ENCODE measurements at regions of chr2 and their contacts with region 1.

Region 1: GRCh38 chr2:121649596-121650314 is 493 bp upstream of the CLASP1 start:
- DNase-seq: peak; percentile 97
- H3K4me3 Mint-ChIP-seq: peak overlapping the region; percentile 89
- H3K27ac Mint-ChIP-seq: peak overlapping the region; percentile 97
- H3K4me1 Mint-ChIP-seq: peaks cover 25% of the 10 kb centered on the region
- H3K27me3 Mint-ChIP-seq: no peaks in the 10 kb centered on the region
- CTCF ChIP-seq: no peak

Region 2: DNA sequence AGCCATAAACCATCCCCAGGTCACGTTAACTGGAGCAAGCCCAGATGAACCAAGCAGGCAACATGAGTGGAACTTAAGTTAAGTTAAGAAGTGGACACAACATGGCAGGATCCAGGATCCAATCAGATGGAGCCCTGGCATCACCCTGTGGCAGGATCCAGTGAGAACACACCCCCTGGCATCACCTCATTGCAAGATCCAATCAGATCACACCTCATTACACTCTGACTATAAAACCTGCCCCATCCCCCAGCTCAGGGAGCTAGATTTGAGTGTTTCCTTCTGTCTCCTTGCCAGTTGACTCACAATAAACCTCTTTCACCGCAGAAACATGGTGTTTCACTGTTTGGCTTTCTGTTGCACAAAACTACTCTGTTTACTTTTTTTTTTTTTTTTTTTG is 537.2 kb before region 1 on chr2:
- CTCF ChIA-PET with region 1: no interaction called
- POLR2A ChIA-PET with region 1: no interaction called
- intact Hi-C with region 1: no loop called
- DNase-seq: peak; percentile 10
- H3K4me3 Mint-ChIP-seq: no peak overlapping the region
- H3K27ac Mint-ChIP-seq: no peak overlapping the region
- H3K4me1 Mint-ChIP-seq: no peaks in the 10 kb centered on the region
- H3K27me3 Mint-ChIP-seq: no peaks in the 10 kb centered on the region
- CTCF ChIP-seq: no peak

Region 3: DNA sequence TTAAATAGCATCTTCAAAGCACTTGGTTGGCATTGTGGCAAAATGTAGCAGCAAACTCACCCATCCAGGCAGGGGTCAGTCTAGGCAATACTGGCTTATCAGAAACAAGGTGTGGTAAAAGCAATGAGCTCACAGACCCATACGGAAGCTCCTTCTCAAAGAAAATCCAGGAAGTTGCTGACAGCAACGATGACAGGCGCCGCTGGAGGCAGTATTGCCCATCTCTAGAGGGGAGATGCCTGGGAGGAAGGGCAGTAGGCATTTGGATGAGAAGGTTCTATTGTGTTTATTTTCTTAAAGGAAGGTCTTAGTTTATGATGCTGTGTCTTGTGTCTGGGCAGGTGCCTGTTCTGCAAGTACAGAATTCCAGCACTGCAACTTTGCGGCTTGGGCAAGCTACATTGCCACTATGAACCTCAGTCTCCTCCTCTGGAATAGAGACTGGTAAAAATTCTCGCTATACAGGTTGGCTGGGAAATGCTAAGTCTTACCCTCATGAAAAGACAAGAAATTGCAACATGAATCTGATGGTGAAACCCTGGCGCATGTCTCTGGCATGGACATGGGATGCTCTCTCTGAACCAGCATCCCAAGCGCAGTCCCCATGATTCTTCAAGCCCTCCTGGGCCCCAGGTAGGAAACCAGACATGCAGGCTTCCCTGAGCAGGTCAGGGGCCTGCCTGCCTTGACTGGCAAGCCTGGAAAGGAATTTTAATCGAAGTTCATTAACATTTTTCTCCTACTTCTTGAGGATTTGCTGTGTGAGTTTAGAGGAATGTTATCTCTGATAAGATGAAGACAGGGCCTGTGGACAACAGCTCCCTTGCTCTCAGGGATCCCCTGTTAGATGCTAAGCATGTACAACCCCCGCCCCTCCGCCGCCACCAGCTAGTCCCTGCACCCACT is 520.7 kb before region 1 on chr2:
- CTCF ChIA-PET with region 1: no interaction called
- POLR2A ChIA-PET with region 1: no interaction called
- intact Hi-C with region 1: no loop called
- DNase-seq: no peak
- H3K4me3 Mint-ChIP-seq: no peak overlapping the region
- H3K27ac Mint-ChIP-seq: no peak overlapping the region
- H3K4me1 Mint-ChIP-seq: peaks cover 3% of the 10 kb centered on the region
- H3K27me3 Mint-ChIP-seq: no peaks in the 10 kb centered on the region
- CTCF ChIP-seq: no peak

Region 4: DNA sequence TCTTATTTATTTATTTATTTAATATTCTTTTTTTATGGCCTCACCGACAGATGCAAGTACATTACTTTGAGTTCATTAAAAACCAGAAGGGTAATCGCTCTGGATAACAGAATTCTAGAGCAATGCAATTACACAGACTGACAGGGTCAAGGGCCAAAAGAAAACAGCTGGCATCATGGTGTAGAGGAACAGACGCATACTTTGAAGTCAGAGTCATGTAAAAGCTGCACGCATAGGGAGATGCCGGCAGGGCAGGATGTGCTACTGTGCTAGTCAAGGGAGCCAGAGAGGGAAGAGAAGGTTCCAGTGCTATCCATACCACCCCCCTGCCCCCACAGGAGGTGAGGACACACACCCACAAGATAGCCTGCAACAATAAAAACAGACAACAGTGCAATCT is 249.6 kb before region 1 on chr2:
- CTCF ChIA-PET with region 1: no interaction called
- POLR2A ChIA-PET with region 1: interaction called, 8 read pairs
- intact Hi-C with region 1: loop called (anchors 1 kb)
- DNase-seq: no peak
- H3K4me3 Mint-ChIP-seq: no peak overlapping the region
- H3K27ac Mint-ChIP-seq: no peak overlapping the region
- H3K4me1 Mint-ChIP-seq: no peaks in the 10 kb centered on the region
- H3K27me3 Mint-ChIP-seq: no peaks in the 10 kb centered on the region
- CTCF ChIP-seq: no peak

Region 5: DNA sequence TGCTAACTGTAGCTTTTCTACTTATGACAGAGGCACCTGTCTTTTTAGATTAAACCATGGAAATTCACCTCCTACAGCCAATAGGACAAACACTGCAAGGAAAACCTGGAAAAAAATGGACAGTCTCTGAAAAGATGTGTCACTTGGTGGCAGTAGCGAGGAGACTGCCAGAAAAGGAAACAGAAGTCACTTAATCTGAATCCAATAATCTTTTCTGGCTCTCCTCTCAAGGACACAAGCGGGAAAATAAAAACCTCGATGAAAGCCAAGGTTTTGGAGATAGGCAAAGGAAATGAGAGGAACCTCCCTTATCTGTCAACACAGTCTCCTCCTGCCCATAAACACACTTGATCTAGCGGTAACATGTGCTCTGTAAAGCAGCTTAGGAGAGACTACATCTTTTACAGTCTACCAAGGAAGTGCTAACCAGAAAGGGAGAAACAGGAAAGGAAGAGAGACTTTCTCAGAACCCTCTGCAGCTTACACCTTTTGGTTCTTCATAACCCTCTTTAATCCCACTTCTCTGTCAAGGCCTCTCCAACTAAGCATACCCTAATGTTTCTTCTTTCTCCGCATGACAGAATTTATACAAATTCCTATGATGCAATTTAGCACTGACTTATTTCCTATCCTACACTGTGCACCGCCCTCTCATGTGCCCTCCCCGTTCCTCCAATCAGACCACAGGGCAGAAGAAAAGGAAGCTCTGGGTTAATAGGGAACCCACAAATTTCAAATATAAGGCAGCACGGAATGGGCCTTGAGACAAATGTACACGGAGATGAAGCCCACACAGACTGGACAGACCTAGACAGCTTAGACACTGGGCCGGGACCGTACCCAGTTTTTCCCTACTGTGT is 53.3 kb before region 1 on chr2:
- CTCF ChIA-PET with region 1: interaction called, 5 read pairs
- POLR2A ChIA-PET with region 1: interaction called, 31 read pairs
- intact Hi-C with region 1: loop called (anchors 5 kb)
- DNase-seq: peak; percentile 65
- H3K4me3 Mint-ChIP-seq: no peak overlapping the region
- H3K27ac Mint-ChIP-seq: peak overlapping the region; percentile 55
- H3K4me1 Mint-ChIP-seq: peaks cover 23% of the 10 kb centered on the region
- H3K27me3 Mint-ChIP-seq: no peaks in the 10 kb centered on the region
- CTCF ChIP-seq: peak; percentile 36

Region 6: GRCh38 chr2:121634354-121635307 is 15.1 kb before region 1 on chr2:
- CTCF ChIA-PET with region 1: interaction called, 3 read pairs
- POLR2A ChIA-PET with region 1: interaction called, 78 read pairs
- intact Hi-C with region 1: no loop called
- DNase-seq: peak; percentile 54
- H3K4me3 Mint-ChIP-seq: peak overlapping the region; percentile 40
- H3K27ac Mint-ChIP-seq: peak overlapping the region; percentile 94
- H3K4me1 Mint-ChIP-seq: peaks cover 42% of the 10 kb centered on the region
- H3K27me3 Mint-ChIP-seq: no peaks in the 10 kb centered on the region
- CTCF ChIP-seq: no peak

Region 7: GRCh38 chr2:121699421-121700333 is 49.9 kb after region 1 on chr2:
- CTCF ChIA-PET with region 1: no interaction called
- POLR2A ChIA-PET with region 1: interaction called, 30 read pairs
- intact Hi-C with region 1: no loop called
- DNase-seq: peak; percentile 90
- H3K4me3 Mint-ChIP-seq: no peak overlapping the region
- H3K27ac Mint-ChIP-seq: peak overlapping the region; percentile 64
- H3K4me1 Mint-ChIP-seq: peaks cover 32% of the 10 kb centered on the region
- H3K27me3 Mint-ChIP-seq: no peaks in the 10 kb centered on the region
- CTCF ChIP-seq: no peak

Region 8: GRCh38 chr2:121736462-121737341 is 86.9 kb after region 1 on chr2 and contains the start of gene NIFK:
- CTCF ChIA-PET with region 1: interaction called, 3 read pairs
- POLR2A ChIA-PET with region 1: interaction called, 31 read pairs
- intact Hi-C with region 1: no loop called
- DNase-seq: peak; percentile 98
- H3K4me3 Mint-ChIP-seq: peak within 1 kb of the TSS; percentile 95
- H3K27ac Mint-ChIP-seq: peak within 1 kb of the TSS; percentile 90
- H3K4me1 Mint-ChIP-seq: peaks cover 7% of the 10 kb centered on the region
- H3K27me3 Mint-ChIP-seq: no peaks in the 10 kb centered on the region
- CTCF ChIP-seq: no peak
- total RNA-seq, gene NIFK: 111 and 171 TPM in 2 replicates